ENCODE measurements at regions of chr5 and their contacts with region 1.

Region 1: DNA sequence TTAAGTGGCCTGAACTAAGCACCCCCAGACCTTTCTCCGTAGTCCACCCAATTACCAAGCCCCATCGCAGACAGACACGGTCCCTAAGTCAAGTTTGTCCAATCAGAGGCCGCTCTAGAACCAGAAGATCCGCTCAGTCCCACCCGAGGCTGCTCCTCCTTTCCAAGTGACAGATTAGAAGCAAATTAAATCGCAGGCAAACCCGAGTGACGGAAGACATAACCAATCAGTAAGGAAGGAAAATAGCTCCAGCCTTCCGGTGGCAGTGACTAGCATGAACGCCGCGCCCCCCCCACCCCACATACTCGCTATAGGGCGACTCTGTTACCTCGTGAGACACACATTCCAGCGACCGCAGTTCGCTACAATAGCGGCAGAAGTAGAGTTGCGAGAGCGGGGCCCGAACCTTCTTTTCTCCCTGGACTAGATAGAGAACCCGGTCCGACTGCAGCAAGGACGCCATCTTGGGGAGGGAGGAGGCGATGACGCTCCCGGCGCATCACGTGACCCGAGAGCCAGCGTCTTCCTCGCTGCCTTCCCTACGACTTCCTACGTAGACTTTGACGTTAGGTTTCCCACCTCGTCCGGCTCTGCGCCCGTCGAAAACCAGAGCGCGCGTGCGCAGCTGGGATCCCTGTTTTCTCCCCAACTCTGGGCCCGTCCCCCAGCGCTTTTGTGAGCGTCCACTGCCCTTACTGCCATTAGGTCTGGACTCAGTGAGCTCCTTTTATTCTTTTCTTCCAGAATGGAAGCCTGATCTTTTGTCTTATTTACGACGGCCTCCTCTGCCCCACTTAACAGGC is at the start of gene DCTN4:
- DNase-seq: peak; percentile 94 to 97
- H3K4me3 ChIP-seq: peak within 1 kb of the TSS; percentile 79
- H3K27ac ChIP-seq: peak within 1 kb of the TSS; percentile 73
- H3K4me1 ChIP-seq: peaks cover 24% of the 10 kb centered on the region
- H3K27me3 ChIP-seq: no peaks in the 10 kb centered on the region
- CTCF ChIP-seq: peak; percentile 55; the same call in 1 of the 2 replicates
- total RNA-seq, gene DCTN4: 49.1 and 54.1 TPM in 2 replicates

Region 2: DNA sequence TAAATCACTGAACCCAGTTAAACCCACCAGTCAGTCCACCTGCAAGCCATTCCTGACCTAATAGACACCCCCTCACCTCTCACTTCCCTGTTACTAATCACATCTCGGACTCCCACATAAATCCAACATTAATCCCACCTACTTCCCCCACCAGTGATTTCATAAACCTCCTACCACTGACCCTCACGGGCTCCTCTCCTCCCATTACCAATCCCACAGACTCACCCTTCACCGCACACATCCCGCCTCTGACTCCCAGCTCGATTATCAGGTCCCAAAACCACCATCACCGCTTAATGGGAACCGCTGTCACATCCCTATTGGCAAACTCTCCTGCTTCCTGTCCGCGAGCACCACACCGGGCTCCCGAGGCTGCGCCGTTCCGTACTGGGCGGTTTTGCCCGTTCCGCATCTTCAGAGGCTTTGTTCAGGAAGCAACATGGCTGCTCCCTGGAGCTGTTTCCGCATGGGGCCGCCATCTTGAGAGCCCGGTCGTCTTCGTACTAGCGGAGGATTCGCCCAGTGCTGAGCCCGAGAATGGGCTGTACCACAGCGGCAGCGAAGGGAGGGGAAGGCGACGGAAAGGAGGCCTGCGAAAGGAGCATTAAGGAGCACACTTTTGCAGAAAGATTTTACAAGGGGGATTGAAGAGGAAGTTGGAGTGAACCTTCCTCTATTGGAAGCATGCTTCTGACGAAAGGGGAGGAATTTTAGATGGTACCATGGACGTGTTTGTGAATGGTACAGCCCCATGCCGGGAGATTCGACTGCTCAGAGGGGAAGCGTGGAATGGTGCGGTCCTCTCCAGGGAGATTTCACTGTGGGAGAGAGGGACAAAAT is 146.0 kb after region 1 on chr5 and contains the start of gene ZNF300:
- CTCF ChIA-PET with region 1: no interaction called
- POLR2A ChIA-PET with region 1: no interaction called
- intact Hi-C with region 1: loop called (anchors 1 kb)
- DNase-seq: peak; percentile 79 to 93
- H3K4me3 ChIP-seq: peak within 1 kb of the TSS; percentile 78
- H3K27ac ChIP-seq: peak within 1 kb of the TSS; percentile 73
- H3K4me1 ChIP-seq: 0 out of 2 replicates have a peak, but pooled peaks cover 6% of the 10 kb centered on the region
- H3K27me3 ChIP-seq: no peaks in the 10 kb centered on the region
- CTCF ChIP-seq: no peak
- total RNA-seq, gene ZNF300: 3.7 and 4.1 TPM in 2 replicates

Measured in PC-9 (cell line).